ENCODE measurements at regions of chr1 and their contacts with region 1.

Region 1: GRCh38 chr1:160149716-160150115 is 1.7 kb upstream of the ATP1A4 start:
- DNase-seq: no peak
- ATAC-seq: peak; percentile 26
- H3K4me3 ChIP-seq: no peak overlapping the region
- H3K27ac ChIP-seq: peak overlapping the region; percentile 61
- H3K4me1 ChIP-seq: peaks cover 0 to 1% of the 10 kb centered on the region in 2 donors
- H3K27me3 ChIP-seq: no peaks in the 10 kb centered on the region

Region 2: GRCh38 chr1:160117709-160118183 is 32.0 kb before region 1 on chr1:
- intact Hi-C with region 1: loop called in 1 of 2 experiments (anchors 5 kb)
- DNase-seq: no peak
- ATAC-seq: peak; percentile 52
- H3K4me3 ChIP-seq: peak overlapping the region; percentile 6 to 72
- H3K27ac ChIP-seq: peak overlapping the region in 1 of 2 donors; percentile 66
- H3K4me1 ChIP-seq: no peaks in the 10 kb centered on the region
- H3K27me3 ChIP-seq: no peaks in the 10 kb centered on the region

Measured in aorta (tissue), 5 donors.